Heart right ventricle (tissue), 16 donors: ENCODE measurements at regions of chr17 and their contacts with region 1.

Region 1: GRCh38 chr17:11564589-11565380 is 33.5 kb upstream of the DNAH9 start:
- DNase-seq: peak in 1 of 2 donors; percentile 19
- ATAC-seq: peak in 4 of 8 donors; percentile 38 to 64 (median 60)
- H3K4me3 ChIP-seq: no peak overlapping the region
- H3K27ac ChIP-seq: no peak overlapping the region
- H3K4me1 ChIP-seq: no peaks in the 10 kb centered on the region
- H3K27me3 ChIP-seq: peaks cover 0 to 8% (median 0%) of the 10 kb centered on the region in 7 donors
- CTCF ChIP-seq: no peak

Region 2: GRCh38 chr17:11485336-11486100 is 79.3 kb before region 1 on chr17:
- intact Hi-C with region 1: loop called in 1 of 10 experiments (anchors 10 kb)
- DNase-seq: no peak
- ATAC-seq: no peak
- H3K4me3 ChIP-seq: no peak overlapping the region
- H3K27ac ChIP-seq: no peak overlapping the region
- H3K4me1 ChIP-seq: no peaks in the 10 kb centered on the region
- H3K27me3 ChIP-seq: peaks cover 0 to 30% (median 7%) of the 10 kb centered on the region in 7 donors
- CTCF ChIP-seq: no peak

Region 3: DNA sequence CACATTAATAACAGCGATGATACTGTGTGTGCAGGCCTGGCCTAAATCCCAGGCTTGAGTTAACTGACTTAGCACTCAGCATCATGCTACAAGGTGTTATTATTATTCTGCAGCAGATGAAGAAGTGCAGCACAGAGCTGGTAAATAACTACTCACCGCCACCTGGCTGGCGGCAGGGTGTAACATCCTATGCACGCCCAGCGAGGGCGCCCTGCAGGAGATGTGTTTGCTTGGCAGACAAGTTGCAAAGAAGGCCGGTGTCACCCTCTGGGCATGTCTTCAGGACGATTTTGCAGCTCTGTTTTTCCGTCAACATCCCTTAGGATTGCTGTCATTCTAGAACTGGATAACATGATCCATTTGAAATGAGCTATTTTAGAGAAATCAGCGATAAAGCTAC is 63.6 kb after region 1 on chr17:
- intact Hi-C with region 1: loop called in 1 of 10 experiments (anchors 10 kb)
- DNase-seq: no peak
- ATAC-seq: no peak
- H3K4me3 ChIP-seq: no peak overlapping the region
- H3K27ac ChIP-seq: no peak overlapping the region
- H3K4me1 ChIP-seq: no peaks in the 10 kb centered on the region
- H3K27me3 ChIP-seq: peaks cover 0 to 59% (median 22%) of the 10 kb centered on the region in 7 donors
- CTCF ChIP-seq: no peak